ENCODE measurements at regions of chr19 and their contacts with region 1.

Region 1: GRCh38 chr19:42313096-42313839 is at the start of gene TMEM145:
- DNase-seq: peak; percentile 26
- H3K4me3 Mint-ChIP-seq: peak within 1 kb of the TSS; percentile 67
- H3K27ac Mint-ChIP-seq: no peak within 1 kb of the TSS
- H3K4me1 Mint-ChIP-seq: peaks cover 10% of the 10 kb centered on the region
- H3K27me3 Mint-ChIP-seq: peaks cover 36% of the 10 kb centered on the region
- total RNA-seq, gene TMEM145: 0.71 and 0.85 TPM in 2 replicates

Region 2: GRCh38 chr19:42121656-42122069 is 191.6 kb before region 1 on chr19:
- intact Hi-C with region 1: no loop called
- DNase-seq: peak; percentile 57
- H3K4me3 Mint-ChIP-seq: peak overlapping the region; percentile 71
- H3K27ac Mint-ChIP-seq: peak overlapping the region; percentile 95
- H3K4me1 Mint-ChIP-seq: peaks cover 49% of the 10 kb centered on the region
- H3K27me3 Mint-ChIP-seq: no peaks in the 10 kb centered on the region

Region 3: GRCh38 chr19:42325273-42325895 is 12.1 kb after region 1 on chr19 and contains the start of gene MEGF8:
- intact Hi-C with region 1: loop called (anchors 1 kb)
- DNase-seq: peak; percentile 98
- H3K4me3 Mint-ChIP-seq: peak within 1 kb of the TSS; percentile 87
- H3K27ac Mint-ChIP-seq: peak within 1 kb of the TSS; percentile 73
- H3K4me1 Mint-ChIP-seq: peaks cover 12% of the 10 kb centered on the region
- H3K27me3 Mint-ChIP-seq: peaks cover 25% of the 10 kb centered on the region
- total RNA-seq, gene MEGF8: 9.7 and 10.3 TPM in 2 replicates

Region 4: GRCh38 chr19:42352301-42353259 is 39.3 kb after region 1 on chr19:
- intact Hi-C with region 1: no loop called
- DNase-seq: no peak
- H3K4me3 Mint-ChIP-seq: no peak overlapping the region
- H3K27ac Mint-ChIP-seq: no peak overlapping the region
- H3K4me1 Mint-ChIP-seq: no peaks in the 10 kb centered on the region
- H3K27me3 Mint-ChIP-seq: no peaks in the 10 kb centered on the region

Region 5: DNA sequence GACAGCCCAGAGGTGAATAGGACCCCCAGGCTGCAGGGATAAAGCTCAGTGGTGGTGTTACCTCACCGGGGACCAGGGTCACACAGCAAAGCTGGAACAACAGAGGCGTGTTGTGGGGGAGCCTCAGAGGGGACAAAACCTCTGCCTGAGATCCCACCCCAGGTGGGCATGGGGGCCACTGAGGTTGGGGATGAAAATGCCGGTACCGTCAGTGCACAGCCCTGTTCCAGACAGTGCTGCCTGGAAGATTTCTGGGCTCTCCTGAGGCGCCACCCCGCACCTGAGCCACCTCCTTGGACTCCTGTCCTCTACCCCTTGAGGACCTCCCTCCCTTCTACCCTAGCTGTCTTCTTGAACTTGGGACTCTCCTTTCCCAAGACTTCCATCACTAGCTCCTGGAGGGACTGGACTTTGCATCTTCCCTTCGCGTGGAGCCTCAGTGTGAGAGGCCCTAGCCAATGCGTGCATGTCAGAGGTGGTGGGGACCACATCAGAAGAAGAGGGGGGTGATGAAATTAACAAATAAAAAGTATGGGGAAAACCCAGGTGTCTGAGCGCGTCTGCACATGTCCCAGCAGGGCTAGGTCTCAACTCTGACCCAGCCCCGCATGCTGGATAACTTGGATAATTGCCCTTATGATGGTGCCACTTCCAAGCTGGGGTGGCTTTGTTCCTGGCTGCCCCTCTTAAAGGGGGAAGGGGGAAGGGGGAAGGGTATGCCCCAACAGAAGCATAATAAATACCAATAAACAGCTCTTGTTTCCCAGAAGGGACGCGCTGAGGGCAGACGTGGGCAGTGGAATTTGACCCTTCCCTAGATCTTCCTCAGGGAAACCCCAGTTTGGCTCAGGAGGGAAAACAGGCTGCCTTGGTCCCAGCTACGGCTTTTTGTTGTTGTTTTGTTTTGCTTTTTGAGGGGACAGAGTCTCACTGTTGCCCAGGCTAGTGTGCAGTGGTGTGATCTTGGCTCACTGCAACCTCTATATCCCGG is 65.3 kb after region 1 on chr19:
- intact Hi-C with region 1: no loop called
- DNase-seq: no peak
- H3K4me3 Mint-ChIP-seq: no peak overlapping the region
- H3K27ac Mint-ChIP-seq: no peak overlapping the region
- H3K4me1 Mint-ChIP-seq: peaks cover 1% of the 10 kb centered on the region
- H3K27me3 Mint-ChIP-seq: peaks cover 12% of the 10 kb centered on the region

Measured in activated T-helper 2 cell treated with anti-CD3 and anti-CD28 coated beads, Interferon-gamma antibody, Interleukin-2, Interleukin-4, amounts not matched to agents 10 μg/mL and 5 μg/mL and 100 μg/mL, durations not matched to agents 14 hours and 24 hours and 36 hours (primary cell).